H1 (cell line): ENCODE measurements at regions of chr11 and their contacts with region 1.

Region 1: DNA sequence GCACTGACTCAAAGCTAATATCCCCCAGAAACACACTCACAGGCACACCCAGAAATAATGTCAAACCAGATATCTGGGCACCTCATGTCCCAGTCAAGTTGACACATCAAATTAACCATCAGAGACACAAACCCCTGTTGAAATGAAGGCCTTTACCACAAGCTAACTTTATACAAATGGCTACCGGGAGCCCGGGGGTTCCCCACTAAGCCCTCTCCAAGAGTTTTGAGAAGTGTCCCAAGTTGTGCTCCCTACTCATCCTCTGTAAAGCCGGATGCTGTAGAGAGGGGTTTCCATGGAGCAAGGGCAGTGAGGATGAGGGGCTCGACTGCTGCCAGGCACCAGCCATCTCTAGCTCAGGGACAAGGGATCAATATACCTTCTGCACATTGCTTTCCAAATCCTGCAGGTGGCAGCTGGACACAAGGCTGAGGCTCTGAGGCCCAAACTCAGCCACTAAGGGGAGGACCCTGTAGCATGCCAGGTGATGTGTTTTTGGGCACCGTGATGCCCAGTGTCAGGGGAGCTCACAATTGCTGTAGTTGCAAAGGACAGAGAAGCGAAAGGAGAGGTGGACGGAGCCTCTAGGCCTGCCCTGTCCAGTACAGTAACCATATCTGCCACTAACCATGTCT is 145.7 kb downstream of the TTC17 start:
- DNase-seq: peak; percentile 21 to 47
- H3K4me3 ChIP-seq: no peak overlapping the region
- H3K27ac ChIP-seq: no peak overlapping the region
- H3K4me1 ChIP-seq: no peaks in the 10 kb centered on the region; a peak in 1 of 7 replicates
- H3K27me3 ChIP-seq: no peaks in the 10 kb centered on the region
- CTCF ChIP-seq: peak; percentile 68 to 87 (median 78)
- EP300 ChIP-seq: no peak
- POLR2A ChIP-seq: no peak
- RAD21 ChIP-seq: peak; percentile 94 to 95

Region 2: DNA sequence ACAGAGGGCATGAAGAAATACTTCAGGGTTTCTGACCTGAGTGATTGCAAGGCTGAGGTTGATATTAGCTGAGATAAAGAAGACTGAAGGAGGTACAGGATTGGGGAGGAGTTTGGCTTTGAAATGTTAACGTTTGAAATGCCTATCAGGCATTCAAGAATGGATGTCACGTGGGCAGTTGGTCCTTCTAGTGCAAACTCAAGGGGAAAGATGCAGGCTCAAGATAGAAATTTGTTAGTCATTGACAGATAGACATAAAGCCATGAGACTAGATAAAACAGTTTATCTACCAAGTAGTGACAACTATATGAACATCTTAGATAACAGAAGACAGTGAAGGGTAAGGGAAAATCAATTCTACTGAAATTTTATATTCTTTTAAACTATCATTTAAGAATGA is 122.6 kb before region 1 on chr11:
- CTCF ChIA-PET with region 1: no interaction called
- POLR2A ChIA-PET with region 1: no interaction called
- DNase-seq: no peak
- H3K4me3 ChIP-seq: no peak overlapping the region
- H3K27ac ChIP-seq: no peak overlapping the region
- H3K4me1 ChIP-seq: peaks cover 0 to 3% (median 0%) of the 10 kb centered on the region in 4 experiments; a peak in 3 of 7 replicates
- H3K27me3 ChIP-seq: no peaks in the 10 kb centered on the region
- CTCF ChIP-seq: no peak
- EP300 ChIP-seq: no peak
- POLR2A ChIP-seq: no peak
- RAD21 ChIP-seq: no peak

Region 3: GRCh38 chr11:43422696-43423095 is 81.7 kb before region 1 on chr11:
- CTCF ChIA-PET with region 1: no interaction called
- POLR2A ChIA-PET with region 1: no interaction called
- DNase-seq: no peak
- H3K4me3 ChIP-seq: no peak overlapping the region
- H3K27ac ChIP-seq: no peak overlapping the region
- H3K4me1 ChIP-seq: no peaks in the 10 kb centered on the region
- H3K27me3 ChIP-seq: no peaks in the 10 kb centered on the region
- CTCF ChIP-seq: no peak
- EP300 ChIP-seq: no peak
- POLR2A ChIP-seq: no peak
- RAD21 ChIP-seq: no peak

Region 4: DNA sequence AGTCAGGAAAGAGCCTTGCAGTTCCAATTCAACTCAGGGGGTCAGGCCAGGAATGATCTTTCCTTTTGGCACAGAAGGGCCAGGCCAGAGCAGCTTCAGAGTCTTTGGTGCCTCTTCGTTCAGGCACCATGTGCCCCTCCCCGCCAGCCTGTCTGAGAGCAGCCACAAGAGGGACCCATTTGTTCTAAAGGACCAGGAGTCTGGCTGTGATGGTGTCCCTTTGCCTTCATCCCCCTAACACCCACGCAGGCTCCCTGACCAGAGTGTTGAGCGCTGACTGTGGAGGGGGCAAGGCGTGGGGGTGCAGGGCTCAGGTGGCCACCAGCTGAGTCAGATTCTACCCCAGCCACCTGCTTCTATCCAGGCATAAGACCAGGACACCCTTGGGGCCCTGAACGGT is 10.7 kb after region 1 on chr11:
- CTCF ChIA-PET with region 1: interaction called, 76 read pairs
- POLR2A ChIA-PET with region 1: interaction called, 3 read pairs
- DNase-seq: peak in 1 of 2 experiments; percentile 63
- H3K4me3 ChIP-seq: no peak overlapping the region
- H3K27ac ChIP-seq: no peak overlapping the region
- H3K4me1 ChIP-seq: peaks cover 0 to 5% (median 0%) of the 10 kb centered on the region in 4 experiments; a peak in 1 of 7 replicates
- H3K27me3 ChIP-seq: peaks cover 0 to 4% (median 0%) of the 10 kb centered on the region in 4 experiments; a peak in 1 of 7 replicates
- CTCF ChIP-seq: peak; percentile 55 to 65 (median 62)
- EP300 ChIP-seq: no peak
- POLR2A ChIP-seq: no peak
- RAD21 ChIP-seq: peak; percentile 51 to 65; a peak in 3 of 4 replicates

Region 5: GRCh38 chr11:43523632-43524031 is 19.2 kb after region 1 on chr11:
- CTCF ChIA-PET with region 1: interaction called, 21 read pairs
- POLR2A ChIA-PET with region 1: no interaction called
- DNase-seq: no peak
- H3K4me3 ChIP-seq: no peak overlapping the region
- H3K27ac ChIP-seq: no peak overlapping the region
- H3K4me1 ChIP-seq: no peaks in the 10 kb centered on the region
- H3K27me3 ChIP-seq: no peaks in the 10 kb centered on the region
- CTCF ChIP-seq: no peak
- EP300 ChIP-seq: no peak
- POLR2A ChIP-seq: no peak
- RAD21 ChIP-seq: no peak

Region 6: GRCh38 chr11:43547430-43547831 is 43.0 kb after region 1 on chr11:
- CTCF ChIA-PET with region 1: interaction called, 16 read pairs
- POLR2A ChIA-PET with region 1: interaction called, 4 read pairs
- DNase-seq: no peak
- H3K4me3 ChIP-seq: peak overlapping the region; percentile 11 to 63 (median 16); a peak in 7 of 8 replicates
- H3K27ac ChIP-seq: no peak overlapping the region
- H3K4me1 ChIP-seq: peaks cover 2 to 12% (median 7%) of the 10 kb centered on the region in 4 experiments; a peak in 6 of 7 replicates
- H3K27me3 ChIP-seq: peaks cover 19 to 38% (median 30%) of the 10 kb centered on the region in 4 experiments
- CTCF ChIP-seq: no peak
- EP300 ChIP-seq: no peak
- POLR2A ChIP-seq: no peak
- RAD21 ChIP-seq: no peak

Region 7: GRCh38 chr11:43557553-43558110 is 53.2 kb after region 1 on chr11:
- CTCF ChIA-PET with region 1: interaction called, 1,064 read pairs
- POLR2A ChIA-PET with region 1: interaction called, 4 read pairs
- DNase-seq: peak in 1 of 2 experiments; percentile 64
- H3K4me3 ChIP-seq: peak overlapping the region; percentile 34 to 58 (median 48); a peak in 7 of 8 replicates
- H3K27ac ChIP-seq: no peak overlapping the region
- H3K4me1 ChIP-seq: peaks cover 5 to 26% (median 15%) of the 10 kb centered on the region in 4 experiments; a peak in 6 of 7 replicates
- H3K27me3 ChIP-seq: peaks cover 2 to 7% (median 4%) of the 10 kb centered on the region in 4 experiments; a peak in 4 of 7 replicates
- CTCF ChIP-seq: peak in 2 of 3 experiments; percentile 16 to 22; a peak in 3 of 4 replicates
- EP300 ChIP-seq: no peak
- POLR2A ChIP-seq: no peak
- RAD21 ChIP-seq: peak in 1 of 2 experiments; percentile 32; a peak in 2 of 4 replicates

Region 8: DNA sequence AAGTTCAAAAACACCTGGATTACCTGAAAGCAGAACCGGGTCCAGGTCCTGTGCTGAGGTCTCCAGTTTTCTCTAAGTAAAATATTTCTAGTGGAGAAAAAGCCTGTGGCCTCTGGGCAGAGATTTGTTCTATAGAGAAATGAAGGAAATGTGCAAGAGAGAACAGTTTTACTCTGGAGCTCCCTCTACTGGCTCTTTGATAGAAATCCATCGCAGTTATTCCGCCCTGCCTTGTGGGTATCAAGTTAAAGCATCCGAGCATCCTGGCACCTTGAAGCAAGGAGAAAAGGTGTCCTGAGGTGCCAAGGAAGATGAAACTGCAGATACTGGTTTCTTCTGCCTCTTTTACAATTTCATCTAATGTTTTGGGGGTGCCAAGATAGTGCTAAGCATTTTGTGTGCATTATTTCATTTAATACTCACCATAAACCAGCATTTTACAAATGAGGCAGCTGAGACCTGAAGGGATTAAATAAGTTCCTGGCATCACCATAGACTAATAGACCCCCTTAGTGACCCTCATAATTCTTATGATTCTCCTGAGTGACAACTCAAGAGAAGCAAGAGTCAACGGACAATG is 63.1 kb after region 1 on chr11:
- CTCF ChIA-PET with region 1: interaction called, 1,064 read pairs
- POLR2A ChIA-PET with region 1: no interaction called
- DNase-seq: no peak
- H3K4me3 ChIP-seq: no peak overlapping the region
- H3K27ac ChIP-seq: no peak overlapping the region
- H3K4me1 ChIP-seq: no peaks in the 10 kb centered on the region
- H3K27me3 ChIP-seq: peaks cover 0 to 9% (median 7%) of the 10 kb centered on the region in 4 experiments; a peak in 6 of 7 replicates
- CTCF ChIP-seq: peak in 2 of 3 experiments; percentile 61 to 71; a peak in 3 of 4 replicates
- EP300 ChIP-seq: no peak
- POLR2A ChIP-seq: no peak
- RAD21 ChIP-seq: peak; percentile 67 to 72

Region 9: GRCh38 chr11:43582863-43583462 is 78.5 kb after region 1 on chr11:
- CTCF ChIA-PET with region 1: interaction called, 1,064 read pairs
- POLR2A ChIA-PET with region 1: no interaction called
- DNase-seq: peak in 1 of 2 experiments; percentile 63
- H3K4me3 ChIP-seq: peak overlapping the region in 3 of 4 experiments; percentile 26 to 90 (median 78); a peak in 6 of 8 replicates
- H3K27ac ChIP-seq: no peak overlapping the region
- H3K4me1 ChIP-seq: peaks cover 3 to 33% (median 10%) of the 10 kb centered on the region in 4 experiments
- H3K27me3 ChIP-seq: peaks cover 50 to 69% (median 66%) of the 10 kb centered on the region in 4 experiments
- CTCF ChIP-seq: no peak
- EP300 ChIP-seq: no peak
- POLR2A ChIP-seq: no peak
- RAD21 ChIP-seq: no peak